CD8-positive, alpha-beta T cell (primary cell): ENCODE measurements at regions of chr9 and their contacts with region 1.

Region 1: GRCh38 chr9:128881901-128882681 is at the starts of genes KYAT1 and LRRC8A:
- DNase-seq: peak; percentile 96 to 99 (median 98)
- ATAC-seq: peak; percentile 91
- H3K4me3 ChIP-seq: peak within 1 kb of the TSS; percentile 80 to 86
- H3K4me3 Mint-ChIP-seq: peak within 1 kb of the TSS; percentile 97
- H3K27ac ChIP-seq: peak within 1 kb of the TSS; percentile 76 to 91
- H3K27ac Mint-ChIP-seq: peak within 1 kb of the TSS; percentile 98
- H3K4me1 ChIP-seq: peaks cover 31% of the 10 kb centered on the region
- H3K4me1 Mint-ChIP-seq: peaks cover 51% of the 10 kb centered on the region
- H3K27me3 ChIP-seq: no peaks in the 10 kb centered on the region
- H3K27me3 Mint-ChIP-seq: no peaks in the 10 kb centered on the region
- CTCF ChIP-seq: no peak
- total RNA-seq, gene KYAT1: 2.4 to 3.0 TPM
- total RNA-seq, gene LRRC8A: 35.0 to 40.1 TPM

Region 2: GRCh38 chr9:128370826-128371621 is 511.1 kb before region 1 on chr9 and contains the start of gene URM1:
- CTCF ChIA-PET with region 1: no interaction called
- POLR2A ChIA-PET with region 1: no interaction called
- intact Hi-C with region 1: loop called (anchors 1 to 2 kb)
- DNase-seq: peak; percentile 91 to 98 (median 96)
- ATAC-seq: peak; percentile 90
- H3K4me3 ChIP-seq: peak within 1 kb of the TSS; percentile 84 to 95
- H3K4me3 Mint-ChIP-seq: peak within 1 kb of the TSS; percentile 97
- H3K27ac ChIP-seq: peak within 1 kb of the TSS; percentile 76 to 96
- H3K27ac Mint-ChIP-seq: peak within 1 kb of the TSS; percentile 98
- H3K4me1 ChIP-seq: peaks cover 16% of the 10 kb centered on the region
- H3K4me1 Mint-ChIP-seq: peaks cover 43% of the 10 kb centered on the region
- H3K27me3 ChIP-seq: no peaks in the 10 kb centered on the region
- H3K27me3 Mint-ChIP-seq: no peaks in the 10 kb centered on the region
- CTCF ChIP-seq: no peak
- total RNA-seq, gene URM1: 30.4 to 31.5 TPM

Region 3: DNA sequence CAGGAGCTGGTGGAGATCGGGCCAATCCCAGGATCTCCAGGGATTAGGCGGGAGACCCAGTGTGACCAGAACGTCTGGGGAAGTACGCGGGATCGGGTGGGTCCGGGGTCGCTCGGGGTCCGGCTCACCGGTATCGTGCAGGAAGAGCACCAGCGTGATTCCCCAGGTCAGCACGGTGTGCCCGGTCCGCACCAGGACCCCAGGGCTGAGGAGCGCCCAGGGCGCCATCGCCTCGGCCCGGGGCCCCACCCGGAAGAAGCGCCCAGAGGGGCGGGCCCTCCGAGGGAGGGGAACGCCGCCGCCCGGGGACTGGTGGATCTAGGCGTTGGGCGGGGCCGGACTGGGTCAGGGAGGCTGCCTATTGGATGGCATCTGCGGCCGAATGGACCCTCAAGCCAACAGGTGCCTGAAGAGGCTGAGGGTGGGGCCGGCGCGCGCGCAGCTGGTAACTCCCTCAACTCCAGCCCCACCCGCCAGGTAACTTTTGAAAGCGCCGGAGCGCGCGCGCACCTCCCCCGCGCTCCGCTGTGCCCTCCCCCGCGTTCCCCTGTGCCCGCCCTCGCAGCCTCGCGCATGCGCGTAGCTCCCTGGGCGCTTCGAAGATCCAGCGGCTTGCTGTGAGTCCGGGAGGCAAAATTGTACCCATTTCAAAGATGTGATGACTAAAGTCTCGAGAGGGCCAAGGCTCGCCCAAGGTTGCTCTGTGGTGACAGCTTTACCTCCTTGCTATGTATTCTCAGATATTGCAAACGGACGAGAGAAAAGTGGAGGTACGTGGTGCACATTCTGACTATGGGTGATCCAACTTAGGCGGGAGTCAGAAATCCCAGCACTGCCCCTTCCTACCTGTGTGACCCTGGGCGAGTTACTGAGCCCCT is 158.0 kb before region 1 on chr9 and contains the start of gene ZDHHC12:
- CTCF ChIA-PET with region 1: no interaction called
- POLR2A ChIA-PET with region 1: interaction called, 5 read pairs
- intact Hi-C with region 1: loop called in 1 of 2 experiments (anchors 1 kb)
- DNase-seq: peak; percentile 97 to 100 (median 99)
- ATAC-seq: peak; percentile 97
- H3K4me3 ChIP-seq: peak within 1 kb of the TSS; percentile 74 to 84
- H3K4me3 Mint-ChIP-seq: peak within 1 kb of the TSS; percentile 89
- H3K27ac ChIP-seq: peak within 1 kb of the TSS; percentile 69 to 79
- H3K27ac Mint-ChIP-seq: peak within 1 kb of the TSS; percentile 92
- H3K4me1 ChIP-seq: peaks cover 37% of the 10 kb centered on the region
- H3K4me1 Mint-ChIP-seq: peaks cover 29% of the 10 kb centered on the region
- H3K27me3 ChIP-seq: no peaks in the 10 kb centered on the region
- H3K27me3 Mint-ChIP-seq: no peaks in the 10 kb centered on the region
- CTCF ChIP-seq: no peak
- total RNA-seq, gene ZDHHC12: 25.5 to 29.6 TPM

Region 4: DNA sequence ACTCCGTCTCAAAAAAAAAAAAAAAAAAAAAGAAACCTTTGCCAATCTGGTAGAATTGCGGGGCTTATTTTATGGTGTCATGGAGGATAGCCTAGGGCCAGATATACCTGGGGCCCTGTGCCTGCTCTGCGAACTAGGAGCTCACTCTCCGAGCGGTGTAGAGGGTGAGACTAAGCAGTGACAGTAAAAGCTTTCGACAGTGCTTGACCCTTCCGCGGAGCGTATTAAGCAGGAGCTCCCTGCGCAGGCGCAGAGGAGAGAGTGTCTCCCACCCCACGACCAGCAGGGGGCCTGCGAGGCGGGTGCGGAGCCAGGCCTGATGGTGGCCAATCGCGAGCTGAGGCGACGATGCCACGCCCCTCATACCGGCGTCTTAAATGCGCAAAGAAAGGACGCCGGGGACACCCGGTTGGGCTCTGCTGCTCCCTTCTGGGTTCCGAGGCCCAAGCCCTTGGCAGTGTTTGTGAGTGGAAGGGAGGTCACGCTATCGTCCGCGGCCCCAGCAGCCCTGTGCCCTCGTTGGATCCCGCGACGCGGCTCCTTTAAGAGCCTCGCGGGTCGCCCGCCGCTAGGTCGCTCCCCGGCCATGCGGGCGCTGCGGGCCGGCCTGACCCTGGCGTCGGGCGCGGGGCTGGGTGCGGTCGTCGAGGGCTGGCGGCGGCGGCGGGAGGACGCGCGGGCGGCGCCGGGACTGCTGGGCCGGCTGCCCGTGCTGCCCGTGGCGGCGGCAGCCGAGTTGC is 63.8 kb before region 1 on chr9 and contains the start of gene ENDOG:
- CTCF ChIA-PET with region 1: interaction called, 3 read pairs
- POLR2A ChIA-PET with region 1: interaction called, 8 read pairs
- intact Hi-C with region 1: loop called (anchors 1 to 5 kb)
- DNase-seq: peak; percentile 94 to 98 (median 97)
- ATAC-seq: peak; percentile 96
- H3K4me3 ChIP-seq: peak within 1 kb of the TSS; percentile 59 to 75
- H3K4me3 Mint-ChIP-seq: peak within 1 kb of the TSS; percentile 91
- H3K27ac ChIP-seq: peak within 1 kb of the TSS; percentile 52 to 67
- H3K27ac Mint-ChIP-seq: peak within 1 kb of the TSS; percentile 87
- H3K4me1 ChIP-seq: peaks cover 12% of the 10 kb centered on the region
- H3K4me1 Mint-ChIP-seq: peaks cover 21% of the 10 kb centered on the region
- H3K27me3 ChIP-seq: no peaks in the 10 kb centered on the region
- H3K27me3 Mint-ChIP-seq: no peaks in the 10 kb centered on the region
- CTCF ChIP-seq: peak; percentile 98
- total RNA-seq, gene ENDOG: 6.2 to 6.4 TPM

Region 5: DNA sequence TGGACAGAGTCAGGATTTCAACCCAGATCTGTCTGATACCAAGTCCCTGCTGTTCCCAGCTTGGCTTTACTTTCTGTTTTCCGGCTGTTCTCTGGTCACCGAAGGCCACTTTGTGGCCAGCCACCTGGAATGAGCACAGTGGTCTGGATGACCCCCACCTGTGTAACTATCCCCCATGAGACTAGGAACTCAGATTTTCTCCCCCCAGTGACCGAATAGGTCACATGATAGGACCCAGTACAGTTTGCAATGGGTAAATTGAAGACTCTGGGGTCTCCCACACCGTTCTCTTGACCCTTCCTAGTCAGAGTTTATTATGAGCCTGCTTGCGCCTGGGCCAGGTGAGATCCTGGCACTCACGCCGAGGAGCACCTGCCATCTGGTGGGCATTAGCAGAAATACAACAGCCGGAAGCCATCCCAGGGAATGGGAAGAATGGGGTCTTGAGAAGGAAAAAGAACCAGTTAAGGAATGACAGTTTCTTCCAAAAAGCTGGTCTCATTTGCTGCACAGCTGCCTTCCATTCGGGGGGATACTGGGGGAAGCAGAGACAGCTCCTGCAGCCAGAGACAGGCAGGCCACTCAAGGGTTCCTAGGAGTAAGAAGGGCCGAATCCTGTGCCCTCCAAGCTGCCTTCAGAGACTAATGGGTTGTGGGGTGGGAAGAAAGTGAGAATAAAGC is 45.8 kb after region 1 on chr9:
- CTCF ChIA-PET with region 1: interaction called, 47 read pairs
- POLR2A ChIA-PET with region 1: interaction called, 3 read pairs
- intact Hi-C with region 1: loop called (anchors 1 kb)
- DNase-seq: peak; percentile 21 to 77 (median 60)
- ATAC-seq: peak; percentile 74
- H3K4me3 ChIP-seq: no peak overlapping the region
- H3K4me3 Mint-ChIP-seq: no peak overlapping the region
- H3K27ac ChIP-seq: no peak overlapping the region
- H3K27ac Mint-ChIP-seq: no peak overlapping the region
- H3K4me1 ChIP-seq: peaks cover 5% of the 10 kb centered on the region
- H3K4me1 Mint-ChIP-seq: peaks cover 8% of the 10 kb centered on the region
- H3K27me3 ChIP-seq: no peaks in the 10 kb centered on the region
- H3K27me3 Mint-ChIP-seq: no peaks in the 10 kb centered on the region
- CTCF ChIP-seq: peak; percentile 97

Region 6: DNA sequence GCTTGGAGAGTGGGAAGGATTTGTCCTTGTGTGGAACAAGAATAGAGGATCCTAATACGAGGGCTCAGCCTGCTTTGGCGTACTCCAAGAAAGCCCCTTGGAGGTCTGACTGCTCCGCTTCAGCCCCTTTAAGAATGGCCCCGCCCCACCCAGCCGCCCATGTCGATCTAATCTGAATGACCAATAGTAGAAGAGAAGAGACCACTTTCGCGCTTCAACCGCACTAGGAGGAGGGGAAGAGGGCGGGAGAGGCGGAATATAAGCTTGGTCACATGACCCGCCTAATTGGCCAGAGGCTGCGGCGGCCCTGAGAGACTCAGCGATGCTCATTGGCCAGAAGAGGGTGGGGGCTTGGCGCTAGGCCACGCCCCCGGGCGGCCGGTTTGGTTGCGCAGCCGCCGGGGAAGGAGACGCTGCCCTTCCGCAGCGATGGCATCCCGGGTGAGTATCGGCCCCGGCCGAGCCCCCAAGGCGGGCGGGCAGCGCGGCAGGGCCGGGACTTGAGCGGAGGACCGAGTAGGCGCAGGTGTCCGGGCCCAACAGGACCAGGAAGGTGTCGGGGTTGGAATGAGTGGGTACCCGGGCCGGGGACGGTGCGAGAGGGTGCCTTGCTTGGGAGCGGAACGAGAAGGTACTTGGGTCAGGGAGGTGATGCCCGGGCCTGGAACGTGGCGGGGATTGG is 154.3 kb after region 1 on chr9 and contains the start of gene MIGA2:
- CTCF ChIA-PET with region 1: no interaction called
- POLR2A ChIA-PET with region 1: no interaction called
- intact Hi-C with region 1: loop called (anchors 1 kb)
- DNase-seq: peak; percentile 85 to 99 (median 94)
- ATAC-seq: peak; percentile 94
- H3K4me3 ChIP-seq: peak within 1 kb of the TSS; percentile 99
- H3K4me3 Mint-ChIP-seq: peak within 1 kb of the TSS; percentile 98
- H3K27ac ChIP-seq: peak within 1 kb of the TSS; percentile 68 to 83
- H3K27ac Mint-ChIP-seq: peak within 1 kb of the TSS; percentile 85
- H3K4me1 ChIP-seq: peaks cover 21% of the 10 kb centered on the region
- H3K4me1 Mint-ChIP-seq: peaks cover 36% of the 10 kb centered on the region
- H3K27me3 ChIP-seq: no peaks in the 10 kb centered on the region
- H3K27me3 Mint-ChIP-seq: no peaks in the 10 kb centered on the region
- CTCF ChIP-seq: no peak
- total RNA-seq, gene MIGA2: 63.5 to 69.0 TPM